ENCODE measurements at regions of chr6 and their contacts with region 1.

Region 1: GRCh38 chr6:110039364-110039980 is 61.4 kb downstream of the GPR6 start:
- DNase-seq: peak; percentile 86
- H3K4me3 ChIP-seq: peak overlapping the region in 2 of 4 donors; percentile 19 to 20
- H3K27ac ChIP-seq: no peak overlapping the region
- H3K4me1 ChIP-seq: peaks cover 0 to 4% (median 0%) of the 10 kb centered on the region in 4 donors
- H3K27me3 ChIP-seq: no peaks in the 10 kb centered on the region
- CTCF ChIP-seq: peak in 3 of 4 experiments; percentile 63 to 81 (median 74)
- EP300 ChIP-seq: no peak
- POLR2A ChIP-seq: no peak

Region 2: GRCh38 chr6:109526905-109527628 is 512.4 kb before region 1 on chr6:
- intact Hi-C with region 1: loop called (anchors 10 kb)
- DNase-seq: no peak
- H3K4me3 ChIP-seq: no peak overlapping the region
- H3K27ac ChIP-seq: no peak overlapping the region
- H3K4me1 ChIP-seq: peaks cover 0 to 10% (median 7%) of the 10 kb centered on the region in 4 donors
- H3K27me3 ChIP-seq: no peaks in the 10 kb centered on the region
- CTCF ChIP-seq: peak in 2 of 4 experiments; percentile 21 to 45
- EP300 ChIP-seq: no peak
- POLR2A ChIP-seq: no peak

Region 3: GRCh38 chr6:109705258-109705657 is 334.2 kb before region 1 on chr6:
- intact Hi-C with region 1: loop called (anchors 5 kb)
- DNase-seq: peak; percentile 80
- H3K4me3 ChIP-seq: no peak overlapping the region
- H3K27ac ChIP-seq: no peak overlapping the region
- H3K4me1 ChIP-seq: peaks cover 0 to 4% (median 2%) of the 10 kb centered on the region in 4 donors
- H3K27me3 ChIP-seq: no peaks in the 10 kb centered on the region
- CTCF ChIP-seq: peak; percentile 63 to 94 (median 86)
- EP300 ChIP-seq: no peak
- POLR2A ChIP-seq: no peak

Region 4: DNA sequence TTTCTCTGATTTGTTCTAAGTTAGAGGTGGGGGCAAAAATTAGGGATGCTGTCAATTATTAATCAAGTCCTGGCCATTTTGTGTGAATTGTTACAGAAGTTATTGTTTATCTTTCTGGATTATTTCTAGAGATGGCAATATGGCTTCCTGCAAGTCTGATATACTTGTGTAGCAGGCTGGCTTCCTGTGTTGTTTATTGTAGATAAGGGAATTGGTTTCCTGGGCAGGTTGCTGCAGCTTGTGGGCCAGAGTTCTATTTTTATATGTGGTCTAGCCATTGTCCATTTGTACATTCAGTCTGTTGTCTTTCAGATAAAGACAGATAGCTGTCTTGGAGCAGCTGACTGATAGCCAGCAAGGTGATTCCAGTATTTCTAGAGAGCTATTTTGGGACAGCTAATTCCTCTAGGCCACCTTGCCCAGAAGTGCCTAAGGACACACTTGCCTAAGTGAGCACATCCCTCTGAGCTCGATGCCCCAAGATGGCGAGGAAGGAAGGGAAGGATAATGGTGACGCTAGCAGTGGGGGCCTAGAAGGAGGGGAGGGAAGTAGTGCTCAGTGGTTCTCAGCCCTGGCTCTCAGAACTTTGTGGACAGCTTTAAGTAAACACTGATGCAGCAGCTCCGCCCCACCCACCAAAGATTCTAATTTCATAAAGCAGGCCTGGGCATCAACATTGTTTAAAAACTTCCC is 350.4 kb after region 1 on chr6:
- intact Hi-C with region 1: loop called (anchors 5 kb)
- DNase-seq: no peak
- H3K4me3 ChIP-seq: no peak overlapping the region
- H3K27ac ChIP-seq: peak overlapping the region in 3 of 4 donors; percentile 17 to 42 (median 23)
- H3K4me1 ChIP-seq: peaks cover 0 to 13% (median 11%) of the 10 kb centered on the region in 4 donors
- H3K27me3 ChIP-seq: no peaks in the 10 kb centered on the region
- CTCF ChIP-seq: no peak
- EP300 ChIP-seq: no peak
- POLR2A ChIP-seq: no peak

Measured in sigmoid colon (tissue), 7 donors.